PC-9 (cell line): ENCODE measurements at regions of chr6 and their contacts with region 1.

Region 1: DNA sequence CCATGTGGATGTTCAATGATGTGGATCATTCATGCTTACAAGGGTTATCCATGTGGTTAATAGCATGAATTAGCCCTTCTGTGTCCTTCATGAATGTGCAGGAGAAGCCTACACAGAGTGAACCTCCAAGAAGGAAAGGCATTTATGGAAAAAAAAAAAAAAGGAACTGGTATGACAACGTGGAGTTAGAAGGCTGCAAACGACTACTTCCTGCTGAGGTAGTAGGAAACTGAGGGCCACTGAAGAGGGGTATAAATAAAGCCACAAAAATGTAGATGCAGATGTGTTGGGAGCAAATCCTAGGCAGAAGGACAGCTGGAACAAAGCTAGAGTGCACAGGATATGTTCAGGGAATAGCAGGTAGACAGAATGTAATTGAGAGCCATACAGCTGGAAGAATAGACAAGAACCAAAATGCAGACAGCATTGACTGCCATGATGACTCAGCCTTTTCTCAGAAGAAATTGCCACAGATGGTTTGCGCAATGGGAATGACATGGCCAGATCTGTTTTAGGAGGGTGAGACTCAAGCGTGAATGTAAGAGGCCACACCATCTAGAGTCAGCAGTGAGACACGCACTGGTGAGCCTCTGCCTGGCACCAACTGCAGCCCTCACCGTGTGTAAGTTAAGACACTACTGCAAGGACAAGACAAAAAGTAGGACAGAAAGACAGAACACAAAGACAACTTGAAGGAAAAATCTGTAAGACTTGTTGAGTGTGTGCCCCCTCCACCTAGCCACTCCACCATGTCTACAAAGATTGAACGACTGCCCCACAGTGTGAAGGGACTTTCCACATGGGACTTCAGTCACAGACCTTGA is 79.8 kb downstream of the KIF13A start:
- DNase-seq: peak; percentile 78 to 94
- H3K4me3 ChIP-seq: no peak overlapping the region; the same call in none of the 2 replicates
- H3K27ac ChIP-seq: peak overlapping the region; percentile 98
- H3K4me1 ChIP-seq: peaks cover 43% of the 10 kb centered on the region
- H3K27me3 ChIP-seq: no peaks in the 10 kb centered on the region
- CTCF ChIP-seq: peak; percentile 16; the same call in 1 of the 2 replicates

Region 2: DNA sequence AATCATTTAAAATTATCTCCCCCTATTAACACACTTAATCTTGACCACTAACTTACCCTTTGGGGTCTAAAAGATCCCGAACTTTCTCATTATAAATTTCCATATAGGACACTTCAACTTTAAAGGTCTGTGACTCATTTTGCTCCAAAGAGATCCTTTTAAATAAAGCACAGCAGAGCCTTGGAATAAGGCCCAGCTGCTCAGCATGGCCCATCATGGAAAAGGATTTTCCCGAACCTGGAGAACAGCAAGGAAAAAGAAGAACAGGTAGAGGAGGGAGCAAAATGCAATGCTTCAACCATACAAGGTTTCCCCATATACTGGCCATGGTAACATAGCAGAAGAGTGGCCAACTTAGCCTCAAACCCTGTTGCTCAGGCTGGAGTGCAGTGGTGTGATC is 52.2 kb before region 1 on chr6:
- CTCF ChIA-PET with region 1: no interaction called
- POLR2A ChIA-PET with region 1: interaction called, 13 read pairs
- intact Hi-C with region 1: no loop called
- DNase-seq: no peak
- H3K4me3 ChIP-seq: no peak overlapping the region
- H3K27ac ChIP-seq: no peak overlapping the region
- H3K4me1 ChIP-seq: no peaks in the 10 kb centered on the region
- H3K27me3 ChIP-seq: no peaks in the 10 kb centered on the region
- CTCF ChIP-seq: no peak

Region 3: GRCh38 chr6:17877196-17877889 is 30.3 kb before region 1 on chr6:
- CTCF ChIA-PET with region 1: interaction called, 4 read pairs
- POLR2A ChIA-PET with region 1: no interaction called
- intact Hi-C with region 1: loop called (anchors 1 kb)
- DNase-seq: peak; percentile 62 to 66
- H3K4me3 ChIP-seq: no peak overlapping the region
- H3K27ac ChIP-seq: peak overlapping the region; percentile 86
- H3K4me1 ChIP-seq: peaks cover 31% of the 10 kb centered on the region
- H3K27me3 ChIP-seq: no peaks in the 10 kb centered on the region
- CTCF ChIP-seq: no peak

Region 4: GRCh38 chr6:18122124-18123093 is 214.8 kb after region 1 on chr6 and contains the start of gene NHLRC1:
- CTCF ChIA-PET with region 1: no interaction called
- POLR2A ChIA-PET with region 1: no interaction called
- intact Hi-C with region 1: loop called (anchors 2 kb)
- DNase-seq: peak; percentile 42 to 88
- H3K4me3 ChIP-seq: peak within 1 kb of the TSS; percentile 19; the same call in 1 of the 2 replicates
- H3K27ac ChIP-seq: no peak within 1 kb of the TSS
- H3K4me1 ChIP-seq: no peaks in the 10 kb centered on the region
- H3K27me3 ChIP-seq: no peaks in the 10 kb centered on the region
- CTCF ChIP-seq: peak; percentile 76
- total RNA-seq, gene NHLRC1: 0.90 and 1.0 TPM in 2 replicates

Region 5: GRCh38 chr6:18861204-18861603 is 953.6 kb after region 1 on chr6:
- CTCF ChIA-PET with region 1: interaction called, 11 read pairs
- POLR2A ChIA-PET with region 1: no interaction called
- intact Hi-C with region 1: no loop called
- DNase-seq: no peak
- H3K4me3 ChIP-seq: no peak overlapping the region
- H3K27ac ChIP-seq: no peak overlapping the region
- H3K4me1 ChIP-seq: no peaks in the 10 kb centered on the region
- H3K27me3 ChIP-seq: no peaks in the 10 kb centered on the region
- CTCF ChIP-seq: no peak